Sigmoid colon (tissue), 7 donors: ENCODE measurements at regions of chr5 and their contacts with region 1.

Region 1: DNA sequence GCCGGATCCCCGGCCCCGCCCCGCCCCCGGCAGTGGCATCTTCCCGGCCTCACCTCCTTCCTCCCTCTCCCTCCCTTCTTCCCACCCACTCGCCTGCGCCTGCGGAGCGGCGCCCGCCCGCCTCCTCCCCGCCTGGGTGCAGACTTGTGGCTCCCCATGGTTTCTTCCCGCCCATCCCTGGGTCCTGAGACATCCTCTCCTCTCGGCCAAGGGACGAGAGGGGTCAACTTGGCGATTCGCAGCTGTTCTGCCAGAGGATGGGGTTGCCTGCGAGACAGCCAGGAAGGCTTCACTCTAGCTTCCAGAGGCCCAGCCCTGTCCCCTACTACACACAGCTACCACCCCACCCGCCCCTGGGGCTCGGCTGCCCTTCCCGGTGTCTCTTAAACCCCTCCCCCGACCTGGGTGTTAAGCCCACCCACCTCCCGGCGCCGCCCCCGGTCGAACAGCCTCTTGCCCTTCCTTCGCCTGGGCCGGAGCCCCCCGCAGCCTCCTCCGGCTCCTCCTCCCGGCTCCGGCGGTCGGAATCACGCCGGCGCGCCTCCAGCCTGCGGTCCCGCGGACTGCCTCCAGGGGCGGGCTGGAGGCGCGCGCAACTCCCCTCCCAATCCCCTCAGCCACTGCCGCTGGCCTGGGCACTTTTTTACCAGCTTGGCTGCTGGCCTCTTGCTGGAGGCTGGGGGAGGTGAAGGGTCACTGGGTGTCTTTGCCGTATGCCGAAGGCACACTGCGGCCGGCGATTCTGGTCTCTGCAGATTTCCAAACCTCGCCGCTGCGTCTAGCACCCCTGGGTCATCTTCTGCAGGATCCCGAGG is 1.9 kb downstream of the JADE2 start:
- DNase-seq: peak; percentile 94
- H3K4me3 ChIP-seq: peak overlapping the region; percentile 73 to 95 (median 84)
- H3K27ac ChIP-seq: peak overlapping the region; percentile 95 to 99 (median 96)
- H3K4me1 ChIP-seq: peaks cover 0 to 55% (median 53%) of the 10 kb centered on the region in 4 donors
- H3K27me3 ChIP-seq: no peaks in the 10 kb centered on the region
- CTCF ChIP-seq: peak; percentile 92 to 99 (median 96)
- EP300 ChIP-seq: no peak
- POLR2A ChIP-seq: peak in 1 of 2 donors; percentile 45

Region 2: GRCh38 chr5:134176511-134177368 is 350.6 kb before region 1 on chr5 and contains the start of gene SKP1:
- intact Hi-C with region 1: loop called (anchors 2 kb)
- DNase-seq: peak; percentile 89
- H3K4me3 ChIP-seq: peak within 1 kb of the TSS; percentile 82 to 99 (median 92)
- H3K27ac ChIP-seq: peak within 1 kb of the TSS; percentile 97 to 100 (median 98)
- H3K4me1 ChIP-seq: peaks cover 0 to 43% (median 38%) of the 10 kb centered on the region in 4 donors
- H3K27me3 ChIP-seq: no peaks in the 10 kb centered on the region
- CTCF ChIP-seq: no peak
- EP300 ChIP-seq: no peak
- POLR2A ChIP-seq: peak; percentile 95 to 98
- total RNA-seq, gene SKP1: 193 to 320 (median 271) TPM

Region 3: GRCh38 chr5:134370871-134371833 is 156.2 kb before region 1 on chr5 and contains the start of gene UBE2B:
- intact Hi-C with region 1: loop called (anchors 1 kb)
- DNase-seq: peak; percentile 100
- H3K4me3 ChIP-seq: peak within 1 kb of the TSS; percentile 72 to 99 (median 96)
- H3K27ac ChIP-seq: peak within 1 kb of the TSS; percentile 97 to 98 (median 98)
- H3K4me1 ChIP-seq: peaks cover 0 to 47% (median 35%) of the 10 kb centered on the region in 4 donors
- H3K27me3 ChIP-seq: no peaks in the 10 kb centered on the region
- CTCF ChIP-seq: no peak
- EP300 ChIP-seq: peak; percentile 22 to 96 (median 50)
- POLR2A ChIP-seq: peak; percentile 49 to 54
- total RNA-seq, gene UBE2B: 72.2 to 122 (median 93.9) TPM

Region 4: GRCh38 chr5:134439210-134439664 is 88.1 kb before region 1 on chr5:
- intact Hi-C with region 1: loop called (anchors 1 kb)
- DNase-seq: peak; percentile 94
- H3K4me3 ChIP-seq: no peak overlapping the region
- H3K27ac ChIP-seq: peak overlapping the region; percentile 72 to 85 (median 81)
- H3K4me1 ChIP-seq: peaks cover 0 to 39% (median 38%) of the 10 kb centered on the region in 4 donors
- H3K27me3 ChIP-seq: no peaks in the 10 kb centered on the region
- CTCF ChIP-seq: no peak
- EP300 ChIP-seq: peak in 2 of 4 donors; percentile 66 to 82
- POLR2A ChIP-seq: no peak

Region 5: DNA sequence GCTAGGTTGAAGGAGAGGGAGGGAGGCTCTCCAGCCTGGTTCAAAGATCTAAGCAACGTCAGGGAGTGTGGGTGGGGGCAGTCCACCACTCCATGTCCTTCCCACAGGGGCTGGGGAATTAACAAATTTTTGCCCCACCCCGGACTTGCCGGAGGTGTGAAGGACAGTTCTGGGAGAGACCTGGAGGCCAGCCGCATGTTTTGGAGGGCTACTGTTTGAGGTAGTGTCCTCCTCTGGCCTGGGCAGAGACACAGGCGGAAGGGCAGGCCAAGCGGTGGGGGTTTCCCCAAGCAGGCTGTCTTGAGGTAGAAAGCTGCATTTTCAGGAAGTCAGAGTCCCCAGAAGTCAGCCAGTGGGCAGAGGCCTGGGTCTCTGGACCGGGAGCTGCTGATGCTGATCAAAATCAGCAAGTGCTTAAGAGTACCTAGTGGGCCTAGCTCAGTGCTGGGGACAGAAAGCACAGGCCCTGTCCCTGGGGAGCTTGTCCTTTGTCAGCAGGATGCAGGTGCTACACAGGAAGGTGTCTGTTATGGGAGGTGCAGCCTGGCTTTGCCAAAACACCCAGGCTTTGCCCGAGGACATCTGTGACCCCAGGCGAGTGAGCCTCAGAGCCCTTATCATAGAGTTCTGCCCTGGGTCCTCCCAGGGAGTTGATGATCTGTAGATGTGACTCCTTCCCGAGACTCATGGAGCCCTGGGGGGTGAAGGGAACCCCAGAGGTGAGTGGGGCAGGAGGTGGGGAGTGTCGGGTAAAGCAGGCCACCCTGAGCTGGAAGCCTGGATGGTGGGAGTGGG is 16.7 kb after region 1 on chr5:
- intact Hi-C with region 1: loop called (anchors 1 kb)
- DNase-seq: no peak
- H3K4me3 ChIP-seq: no peak overlapping the region
- H3K27ac ChIP-seq: peak overlapping the region; percentile 37 to 77 (median 60)
- H3K4me1 ChIP-seq: peaks cover 0 to 59% (median 55%) of the 10 kb centered on the region in 4 donors
- H3K27me3 ChIP-seq: no peaks in the 10 kb centered on the region
- CTCF ChIP-seq: no peak
- EP300 ChIP-seq: no peak
- POLR2A ChIP-seq: no peak

Region 6: DNA sequence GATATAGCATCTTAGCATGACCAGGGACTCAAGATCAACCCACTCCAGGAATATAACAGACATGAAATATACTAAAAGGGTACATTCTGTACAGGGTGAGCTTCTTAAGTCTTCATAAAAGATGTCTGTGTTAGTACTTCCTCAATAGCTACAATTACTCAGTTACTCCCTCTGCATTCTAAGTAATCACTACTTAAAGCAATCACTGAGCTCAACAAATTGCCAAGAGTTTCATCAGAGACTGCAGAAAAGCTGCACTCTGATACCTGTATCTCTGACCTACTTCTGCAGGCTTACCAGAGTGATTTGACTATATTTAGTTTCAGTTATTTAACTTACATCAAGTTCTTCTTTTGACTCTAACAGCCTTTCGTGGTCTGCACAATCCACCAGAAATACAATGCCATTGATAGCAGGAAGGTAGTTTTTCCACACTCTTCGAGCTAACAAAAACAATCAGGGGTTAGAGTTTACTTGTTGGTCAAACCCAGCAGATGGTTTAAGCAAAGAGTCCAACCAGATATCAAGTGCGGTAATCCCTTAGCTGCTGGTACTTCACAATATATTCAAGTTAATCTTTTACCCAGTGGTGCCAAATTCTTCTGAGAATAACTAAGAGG is 82.0 kb after region 1 on chr5:
- intact Hi-C with region 1: no loop called
- DNase-seq: no peak
- H3K4me3 ChIP-seq: no peak overlapping the region
- H3K27ac ChIP-seq: no peak overlapping the region
- H3K4me1 ChIP-seq: no peaks in the 10 kb centered on the region
- H3K27me3 ChIP-seq: no peaks in the 10 kb centered on the region
- CTCF ChIP-seq: no peak
- EP300 ChIP-seq: no peak
- POLR2A ChIP-seq: no peak

Region 7: DNA sequence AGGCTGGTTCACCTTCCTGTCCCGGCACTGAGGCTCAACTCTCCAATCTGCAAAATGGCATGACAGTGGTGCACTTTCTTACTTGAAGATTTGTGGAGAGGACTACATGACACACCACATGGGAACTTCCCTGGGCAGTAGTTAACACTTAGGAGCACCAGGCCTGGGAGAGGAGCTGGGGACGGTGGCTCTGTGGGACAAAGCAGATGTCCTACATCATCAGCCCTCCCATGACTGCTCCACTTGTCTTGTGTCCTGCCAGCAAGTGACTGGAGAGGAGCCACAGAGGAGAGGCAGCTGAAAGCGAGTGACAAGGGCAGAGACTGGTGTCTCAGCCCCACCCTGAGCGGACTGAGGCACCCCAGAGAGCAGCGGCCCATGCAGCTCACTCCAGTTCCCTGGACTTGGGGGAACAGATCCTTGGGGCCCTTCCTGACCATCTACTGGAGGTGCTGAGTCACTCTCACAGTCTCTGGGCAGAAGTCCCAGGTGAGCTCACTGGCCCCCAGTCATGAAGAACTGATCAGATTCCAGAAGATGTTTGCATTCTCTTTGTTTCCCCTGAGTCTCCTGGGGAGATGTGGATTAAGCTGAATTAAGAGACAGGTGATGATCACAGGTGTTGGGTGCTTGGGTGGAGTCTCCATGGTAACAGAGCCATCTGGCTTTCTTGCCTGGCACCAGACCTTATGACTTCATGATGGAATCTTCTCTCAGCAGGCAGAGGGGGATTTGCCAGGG is 1293.9 kb after region 1 on chr5:
- intact Hi-C with region 1: no loop called
- DNase-seq: no peak
- H3K4me3 ChIP-seq: no peak overlapping the region
- H3K27ac ChIP-seq: no peak overlapping the region
- H3K4me1 ChIP-seq: no peaks in the 10 kb centered on the region
- H3K27me3 ChIP-seq: no peaks in the 10 kb centered on the region
- CTCF ChIP-seq: no peak
- EP300 ChIP-seq: no peak
- POLR2A ChIP-seq: no peak